ENCODE measurements at regions of chr12 and their contacts with region 1.

Region 1: DNA sequence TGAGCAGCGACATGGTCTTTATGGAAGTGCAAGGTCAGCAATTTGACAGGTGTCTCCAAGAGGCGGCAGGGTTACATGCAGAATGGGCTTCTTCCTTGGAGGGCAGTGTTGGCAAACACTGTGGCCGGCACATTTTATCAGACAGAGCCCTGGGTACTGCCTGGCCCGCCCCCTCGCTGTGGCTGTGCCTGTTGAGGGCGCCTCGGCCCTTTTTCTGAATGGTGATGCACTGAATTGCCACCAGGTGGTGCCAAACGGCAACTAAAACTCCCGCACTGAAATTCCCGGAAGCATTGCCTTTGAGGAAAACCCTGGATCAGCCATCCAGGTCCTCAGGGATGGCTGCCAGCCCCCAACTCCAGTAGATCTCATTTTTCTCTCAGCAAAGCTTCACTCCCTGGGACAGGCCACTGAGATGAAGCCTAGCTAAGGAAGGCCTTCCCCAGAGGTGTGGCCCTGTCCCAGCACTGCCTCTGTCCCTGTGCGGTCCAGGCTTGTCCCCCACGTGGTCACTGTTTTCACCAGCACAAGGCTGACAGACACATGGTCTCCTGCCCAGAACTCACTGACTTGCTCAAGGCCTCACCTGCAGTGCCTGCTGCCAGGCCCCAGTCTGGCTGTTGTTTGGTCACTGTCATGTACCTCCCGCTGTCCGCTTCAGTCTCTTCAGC is 73.6 kb downstream of the TESC start:
- DNase-seq: peak; percentile 77
- H3K4me3 ChIP-seq: no peak overlapping the region
- H3K27ac ChIP-seq: no peak overlapping the region
- H3K4me1 ChIP-seq: no peaks in the 10 kb centered on the region
- H3K27me3 ChIP-seq: no peaks in the 10 kb centered on the region
- CTCF ChIP-seq: peak; percentile 86 to 92
- POLR2A ChIP-seq: no peak

Region 2: GRCh38 chr12:116969615-116970580 is 55.7 kb before region 1 on chr12:
- CTCF ChIA-PET with region 1: no interaction called
- POLR2A ChIA-PET with region 1: no interaction called
- dilution Hi-C with region 1: no loop called
- intact Hi-C with region 1: no loop called
- DNase-seq: no peak
- H3K4me3 ChIP-seq: no peak overlapping the region
- H3K27ac ChIP-seq: no peak overlapping the region
- H3K4me1 ChIP-seq: no peaks in the 10 kb centered on the region
- H3K27me3 ChIP-seq: no peaks in the 10 kb centered on the region
- CTCF ChIP-seq: no peak
- POLR2A ChIP-seq: no peak

Region 3: DNA sequence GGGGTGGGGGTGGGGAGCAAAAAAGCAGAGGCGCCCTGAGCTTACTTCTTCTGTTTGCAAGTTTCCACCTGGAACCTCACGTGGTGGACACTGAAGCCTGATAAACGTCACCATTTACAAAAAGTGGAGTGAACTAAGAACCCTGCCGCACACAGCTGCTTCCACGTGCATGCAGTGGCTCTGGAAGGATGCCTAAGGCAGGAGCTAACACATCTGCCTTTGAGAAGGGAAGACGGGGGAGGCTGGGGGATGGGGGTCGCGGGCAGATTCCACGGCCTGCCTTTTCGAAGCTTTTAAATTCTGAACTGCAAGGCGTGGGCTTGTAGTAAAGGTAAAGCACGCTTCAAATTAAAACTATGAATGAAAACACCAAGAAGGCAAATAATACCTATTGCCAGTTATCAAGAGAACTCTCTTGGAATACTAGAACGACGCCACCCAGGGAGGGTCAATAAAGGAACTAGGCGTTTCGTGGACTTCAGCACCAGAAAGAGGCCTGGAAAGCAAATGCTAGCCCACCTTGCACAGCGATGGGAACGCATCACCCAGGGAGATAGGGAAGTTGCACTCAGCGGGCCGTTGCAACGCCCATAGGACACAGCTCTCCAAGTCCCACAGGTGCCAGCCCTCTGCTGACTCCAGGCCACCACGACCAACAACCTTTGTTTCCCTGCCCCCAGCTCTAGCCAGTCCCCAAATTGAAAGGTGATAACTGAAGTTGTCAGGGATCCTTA is 11.8 kb after region 1 on chr12:
- CTCF ChIA-PET with region 1: no interaction called
- POLR2A ChIA-PET with region 1: no interaction called
- dilution Hi-C with region 1: no loop called
- intact Hi-C with region 1: no loop called
- DNase-seq: no peak
- H3K4me3 ChIP-seq: no peak overlapping the region
- H3K27ac ChIP-seq: no peak overlapping the region
- H3K4me1 ChIP-seq: no peaks in the 10 kb centered on the region
- H3K27me3 ChIP-seq: peaks cover 11 to 19% of the 10 kb centered on the region in 2 experiments
- CTCF ChIP-seq: no peak
- POLR2A ChIP-seq: no peak

Region 4: GRCh38 chr12:117100251-117100650 is 74.6 kb after region 1 on chr12:
- CTCF ChIA-PET with region 1: no interaction called
- POLR2A ChIA-PET with region 1: no interaction called
- dilution Hi-C with region 1: no loop called
- intact Hi-C with region 1: loop called (anchors 2 kb)
- DNase-seq: no peak
- H3K4me3 ChIP-seq: no peak overlapping the region
- H3K27ac ChIP-seq: no peak overlapping the region
- H3K4me1 ChIP-seq: no peaks in the 10 kb centered on the region
- H3K27me3 ChIP-seq: peaks cover 39 to 49% of the 10 kb centered on the region in 2 experiments
- CTCF ChIP-seq: peak in 1 of 2 donors; percentile 44
- POLR2A ChIP-seq: no peak

Region 5: GRCh38 chr12:117119592-117120198 is 94.1 kb after region 1 on chr12:
- CTCF ChIA-PET with region 1: interaction called, 9 read pairs
- POLR2A ChIA-PET with region 1: no interaction called
- dilution Hi-C with region 1: no loop called
- intact Hi-C with region 1: loop called (anchors 1 kb)
- DNase-seq: no peak
- H3K4me3 ChIP-seq: no peak overlapping the region
- H3K27ac ChIP-seq: no peak overlapping the region
- H3K4me1 ChIP-seq: peaks cover 3% of the 10 kb centered on the region
- H3K27me3 ChIP-seq: no peaks in the 10 kb centered on the region
- CTCF ChIP-seq: peak; percentile 46 to 51
- POLR2A ChIP-seq: no peak

Region 6: DNA sequence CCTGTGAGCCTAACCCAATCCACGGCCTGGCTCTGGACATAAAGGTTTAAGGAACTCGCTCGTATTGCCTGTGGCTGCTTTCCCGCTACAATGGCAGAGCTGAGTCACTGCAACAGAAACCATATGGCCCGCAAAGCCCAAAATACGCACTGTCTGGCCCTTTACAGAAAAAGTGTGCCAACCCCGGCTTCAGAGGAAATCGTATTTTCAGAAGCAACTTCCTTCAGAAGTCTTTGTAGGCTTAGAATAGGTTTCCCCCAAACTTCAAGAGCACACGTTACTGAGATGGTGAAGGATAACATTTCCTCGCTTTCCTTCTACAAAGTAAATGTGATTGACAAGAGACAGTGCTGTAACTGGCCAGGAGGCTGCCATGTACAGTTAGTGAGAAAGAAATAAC is 108.4 kb after region 1 on chr12:
- CTCF ChIA-PET with region 1: interaction called, 12 read pairs
- POLR2A ChIA-PET with region 1: no interaction called
- dilution Hi-C with region 1: no loop called
- intact Hi-C with region 1: loop called (anchors 1 kb)
- DNase-seq: peak; percentile 24
- H3K4me3 ChIP-seq: no peak overlapping the region
- H3K27ac ChIP-seq: no peak overlapping the region
- H3K4me1 ChIP-seq: peaks cover 4% of the 10 kb centered on the region
- H3K27me3 ChIP-seq: no peaks in the 10 kb centered on the region
- CTCF ChIP-seq: no peak
- POLR2A ChIP-seq: no peak

Region 7: GRCh38 chr12:117155278-117156060 is 129.9 kb after region 1 on chr12:
- CTCF ChIA-PET with region 1: interaction called, 14 read pairs
- POLR2A ChIA-PET with region 1: no interaction called
- dilution Hi-C with region 1: no loop called
- intact Hi-C with region 1: loop called (anchors 1 kb)
- DNase-seq: peak; percentile 12
- H3K4me3 ChIP-seq: no peak overlapping the region
- H3K27ac ChIP-seq: no peak overlapping the region
- H3K4me1 ChIP-seq: no peaks in the 10 kb centered on the region
- H3K27me3 ChIP-seq: no peaks in the 10 kb centered on the region
- CTCF ChIP-seq: peak; percentile 66 to 78
- POLR2A ChIP-seq: no peak

Measured in endothelial cell of umbilical vein (primary cell).